Dorsolateral prefrontal cortex (tissue), 120 donors: ENCODE measurements at regions of chr17 and their contacts with region 1.

Region 1: GRCh38 chr17:47363171-47363570 is 39.4 kb downstream of the EFCAB13 start:
- DNase-seq: no peak
- H3K4me3 ChIP-seq: no peak overlapping the region
- H3K27ac ChIP-seq: no peak overlapping the region
- H3K27me3 ChIP-seq: no peaks in the 10 kb centered on the region
- CTCF ChIP-seq: no peak

Region 2: DNA sequence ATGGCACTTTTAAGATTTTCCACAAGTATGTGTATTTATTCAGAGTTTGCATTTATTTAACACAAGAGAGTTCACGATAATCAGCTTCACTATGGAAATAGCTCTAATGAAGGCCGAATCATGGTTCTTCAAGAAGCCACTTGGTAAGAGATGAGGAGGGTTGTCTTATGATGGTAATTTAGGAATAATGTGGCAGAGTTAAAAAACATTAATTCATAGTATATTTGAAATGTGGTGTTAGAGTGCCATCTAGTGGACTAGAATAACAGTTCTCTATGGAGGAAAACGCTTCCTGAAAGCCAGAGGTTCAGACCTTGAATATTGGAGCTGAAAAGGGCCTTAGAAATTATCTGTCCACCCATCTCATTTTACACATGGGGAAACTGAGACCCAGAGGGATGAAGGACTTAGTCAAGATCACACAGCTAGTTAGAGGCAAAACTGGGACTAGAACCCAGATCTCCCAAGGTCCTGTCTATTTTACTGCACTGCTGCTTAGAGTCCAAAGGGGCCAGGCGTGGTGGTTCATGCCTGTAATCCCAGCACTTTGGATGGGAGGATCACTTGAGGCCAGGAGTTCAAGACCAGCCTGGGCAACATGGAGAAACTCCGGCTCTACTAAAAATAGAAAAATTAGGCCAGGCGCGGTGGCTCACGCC is 252.7 kb after region 1 on chr17:
- intact Hi-C with region 1: loop called in 1 of 2 experiments (anchors 5 kb)
- DNase-seq: no peak
- H3K4me3 ChIP-seq: no peak overlapping the region
- H3K27ac ChIP-seq: peak overlapping the region in 6 of 59 donors; percentile 0 to 33 (median 16)
- H3K27me3 ChIP-seq: no peaks in the 10 kb centered on the region
- CTCF ChIP-seq: peak; percentile 61 to 93 (median 82)

Region 3: GRCh38 chr17:48344246-48344645 is 981.1 kb after region 1 on chr17:
- intact Hi-C with region 1: no loop called
- DNase-seq: no peak
- H3K4me3 ChIP-seq: no peak overlapping the region
- H3K27ac ChIP-seq: no peak overlapping the region
- H3K27me3 ChIP-seq: peaks cover 0 to 91% (median 28%) of the 10 kb centered on the region in 45 donors
- CTCF ChIP-seq: no peak